ENCODE measurements at regions of chr3 and their contacts with region 1.

Region 1: DNA sequence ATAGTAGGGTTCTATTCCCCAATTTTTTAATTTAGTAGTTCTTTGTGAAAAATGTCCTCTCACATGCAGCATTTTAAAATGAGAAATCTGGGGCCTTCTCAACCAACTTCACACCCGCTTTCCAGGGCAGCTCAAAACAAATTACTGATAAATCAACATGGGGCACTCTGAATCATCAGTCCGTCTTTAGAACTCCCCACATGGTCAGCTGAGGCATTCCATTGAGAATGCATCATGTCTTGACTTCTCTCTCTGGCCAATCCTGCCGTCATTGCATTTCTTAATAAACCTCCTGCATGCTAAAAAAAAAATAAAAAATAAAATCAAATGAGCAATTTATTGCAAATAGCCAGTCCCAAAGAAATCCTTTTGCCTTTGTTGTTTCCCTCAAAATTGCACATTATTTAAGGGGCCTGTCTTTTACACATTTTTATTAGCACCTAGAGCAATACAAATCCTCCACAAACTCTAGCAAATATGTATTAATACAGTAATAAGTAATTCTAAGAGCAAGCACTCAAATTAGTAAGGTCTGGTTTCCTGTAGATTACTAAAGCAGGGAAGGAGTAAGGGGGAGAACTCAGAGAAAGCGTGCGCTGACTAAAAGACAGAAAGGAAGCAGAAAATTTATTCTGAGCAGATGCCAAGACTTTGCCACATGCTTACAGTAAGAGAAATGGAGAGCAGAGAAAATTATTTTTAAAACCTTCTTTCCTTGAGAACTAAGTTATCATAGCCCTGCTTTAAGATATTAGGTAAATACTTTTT is 175.7 kb downstream of the TNIK start:
- DNase-seq: no peak
- H3K4me3 Mint-ChIP-seq: no peak overlapping the region
- H3K27ac Mint-ChIP-seq: peak overlapping the region; percentile 52
- H3K4me1 Mint-ChIP-seq: peaks cover 71% of the 10 kb centered on the region
- H3K27me3 Mint-ChIP-seq: no peaks in the 10 kb centered on the region

Region 2: GRCh38 chr3:171162986-171163723 is 121.3 kb before region 1 on chr3:
- intact Hi-C with region 1: loop called (anchors 1 kb)
- DNase-seq: no peak
- H3K4me3 Mint-ChIP-seq: no peak overlapping the region
- H3K27ac Mint-ChIP-seq: no peak overlapping the region
- H3K4me1 Mint-ChIP-seq: peaks cover 20% of the 10 kb centered on the region
- H3K27me3 Mint-ChIP-seq: no peaks in the 10 kb centered on the region

Region 3: GRCh38 chr3:171225708-171226107 is 58.8 kb before region 1 on chr3:
- intact Hi-C with region 1: loop called (anchors 2 kb)
- DNase-seq: no peak
- H3K4me3 Mint-ChIP-seq: no peak overlapping the region
- H3K27ac Mint-ChIP-seq: no peak overlapping the region
- H3K4me1 Mint-ChIP-seq: peaks cover 58% of the 10 kb centered on the region
- H3K27me3 Mint-ChIP-seq: no peaks in the 10 kb centered on the region

Region 4: DNA sequence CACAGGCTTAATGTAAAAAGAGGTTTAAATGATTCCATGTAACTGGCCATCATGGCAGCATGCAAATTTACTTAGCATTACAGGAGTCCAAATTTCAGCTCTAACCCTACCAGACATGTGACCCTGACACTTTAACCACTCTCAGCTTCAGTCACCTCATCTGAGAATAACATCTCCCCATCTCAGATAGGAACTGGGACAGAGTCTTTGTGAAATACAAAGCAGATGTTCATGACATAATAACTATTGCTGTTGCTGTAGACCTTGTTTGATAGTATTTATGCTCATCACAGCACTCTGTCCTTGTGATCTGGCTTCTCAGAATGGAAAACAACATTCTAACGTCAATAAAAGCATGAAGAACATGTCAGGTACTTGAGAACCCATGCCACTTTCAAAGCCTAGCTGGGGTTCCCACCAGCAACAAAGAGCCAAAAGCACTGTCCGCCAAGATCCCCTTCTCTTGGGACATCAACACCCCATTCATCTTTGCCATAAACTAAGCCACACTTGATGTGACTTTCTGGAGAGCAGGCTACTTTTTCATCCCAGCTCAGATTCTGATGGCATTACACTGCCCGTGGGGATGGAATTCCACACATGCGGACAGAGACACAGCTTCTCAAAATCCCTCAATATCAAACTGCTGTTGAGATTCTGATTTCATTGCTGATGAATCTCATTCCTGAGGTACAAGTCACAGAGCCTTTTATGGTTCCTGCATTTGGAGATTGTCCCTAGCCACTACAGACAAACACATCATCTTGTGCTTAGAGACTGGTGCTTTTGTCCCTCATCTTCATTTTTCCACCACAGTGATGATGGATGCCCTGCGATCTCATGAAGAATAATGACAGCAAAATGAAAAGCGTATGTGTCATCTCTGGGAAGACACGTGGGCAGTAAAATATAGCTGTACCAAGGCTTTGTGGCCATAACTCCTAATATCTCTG is 27.0 kb before region 1 on chr3:
- intact Hi-C with region 1: loop called (anchors 1 kb)
- DNase-seq: no peak
- H3K4me3 Mint-ChIP-seq: peak overlapping the region; percentile 29
- H3K27ac Mint-ChIP-seq: peak overlapping the region; percentile 94
- H3K4me1 Mint-ChIP-seq: peaks cover 92% of the 10 kb centered on the region
- H3K27me3 Mint-ChIP-seq: no peaks in the 10 kb centered on the region

Region 5: DNA sequence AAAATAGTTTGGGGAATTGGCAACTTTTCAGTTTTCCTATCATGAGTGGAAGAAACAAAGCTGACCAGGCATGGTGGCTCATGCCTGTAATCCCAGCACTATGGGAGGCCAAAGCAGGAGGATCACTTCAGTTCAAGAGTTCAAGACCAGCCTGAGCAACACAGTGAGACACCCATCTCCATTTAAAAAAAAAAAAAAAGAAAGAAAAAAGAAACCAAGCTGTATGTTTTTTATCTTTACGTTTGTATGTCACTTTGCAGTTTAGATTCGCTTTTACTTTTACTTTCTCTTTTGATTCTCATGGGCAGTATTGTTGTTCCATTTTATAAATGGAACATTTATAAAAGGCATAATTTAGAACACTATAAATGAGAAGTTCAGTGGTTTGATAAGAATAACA is 206.9 kb after region 1 on chr3:
- intact Hi-C with region 1: loop called (anchors 1 kb)
- DNase-seq: no peak
- H3K4me3 Mint-ChIP-seq: peak overlapping the region; percentile 71
- H3K27ac Mint-ChIP-seq: peak overlapping the region; percentile 67
- H3K4me1 Mint-ChIP-seq: peaks cover 55% of the 10 kb centered on the region
- H3K27me3 Mint-ChIP-seq: no peaks in the 10 kb centered on the region

Region 6: GRCh38 chr3:172550347-172550943 is 1266.0 kb after region 1 on chr3:
- intact Hi-C with region 1: loop called (anchors 2 kb)
- DNase-seq: peak; percentile 61
- H3K4me3 Mint-ChIP-seq: peak overlapping the region; percentile 45
- H3K27ac Mint-ChIP-seq: peak overlapping the region; percentile 84
- H3K4me1 Mint-ChIP-seq: peaks cover 76% of the 10 kb centered on the region
- H3K27me3 Mint-ChIP-seq: no peaks in the 10 kb centered on the region

Measured in activated T-helper 1 cell treated with anti-CD3 and anti-CD28 coated beads, Interleukin-12 subunit alpha, Interleukin-12 subunit beta, Interleukin-2, Interleukin-4 antibody, amounts not matched to agents 30 ng/mL and 10 ng/mL and 1 ng/mL, durations not matched to agents 14 hours and 24 hours and 36 hours (primary cell).